ENCODE measurements at regions of chr11 and their contacts with region 1.

Region 1: DNA sequence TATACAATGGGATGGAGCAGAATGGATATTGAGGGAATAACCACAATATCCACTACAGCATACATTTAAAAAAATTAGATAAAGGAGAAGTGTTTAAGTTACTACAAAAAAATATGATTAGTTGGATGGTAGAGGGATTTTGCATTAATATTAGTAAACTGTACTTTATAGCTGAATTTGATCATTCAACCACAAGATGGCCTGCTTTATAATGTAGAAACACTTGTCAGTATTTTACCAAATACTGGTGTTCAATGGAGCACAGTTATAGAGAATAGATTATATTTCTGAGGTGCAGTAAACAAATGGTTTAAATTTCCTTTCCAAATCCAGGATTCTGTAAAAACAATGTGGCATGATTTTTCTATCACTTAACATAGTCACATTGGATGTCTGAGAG is 818.8 kb upstream of the CHORDC1 start:
- DNase-seq: no peak
- ATAC-seq: no peak

Region 2: GRCh38 chr11:91133361-91133760 is 91.7 kb after region 1 on chr11:
- intact Hi-C with region 1: no loop called
- DNase-seq: no peak
- ATAC-seq: no peak

Region 3: GRCh38 chr11:91248199-91248807 is 206.7 kb after region 1 on chr11:
- intact Hi-C with region 1: loop called (anchors 2 kb)
- DNase-seq: no peak
- ATAC-seq: no peak

Measured in Right ventricle myocardium inferior (tissue), 1 donor.